ENCODE measurements at regions of chr12 and their contacts with region 1.

Region 1: DNA sequence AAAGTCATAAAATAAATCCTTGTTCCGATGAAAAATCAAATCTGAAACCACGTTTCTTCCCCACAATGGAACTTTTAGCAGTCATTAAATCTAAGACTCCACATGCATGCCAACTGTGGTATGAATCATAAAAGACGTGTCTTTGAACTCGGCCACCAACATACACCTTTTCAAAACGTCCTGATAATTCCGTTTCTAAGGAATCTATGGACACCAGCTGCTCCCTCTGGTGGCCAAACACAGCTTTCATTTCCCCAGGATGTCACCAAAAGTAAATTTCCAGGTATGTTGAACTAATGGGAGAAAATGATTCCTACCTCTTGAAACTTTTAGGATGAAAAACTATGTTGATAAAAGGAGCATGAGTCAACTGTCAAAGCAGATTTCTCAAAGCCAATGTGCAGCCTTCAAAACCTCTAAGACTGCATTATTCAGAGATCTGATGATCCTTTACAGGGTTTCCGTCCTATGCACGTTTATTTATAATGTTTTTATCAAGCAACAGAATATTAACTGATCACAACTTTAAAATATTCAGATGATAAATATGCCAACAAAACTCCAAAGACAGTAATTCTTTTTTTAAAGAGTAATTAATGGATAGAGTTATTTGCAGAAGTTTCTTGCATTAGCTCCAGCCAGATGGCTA is 96.2 kb downstream of the CIT start:
- DNase-seq: no peak

Region 2: GRCh38 chr12:119130523-119130922 is 650.4 kb before region 1 on chr12:
- intact Hi-C with region 1: no loop called
- DNase-seq: no peak

Region 3: DNA sequence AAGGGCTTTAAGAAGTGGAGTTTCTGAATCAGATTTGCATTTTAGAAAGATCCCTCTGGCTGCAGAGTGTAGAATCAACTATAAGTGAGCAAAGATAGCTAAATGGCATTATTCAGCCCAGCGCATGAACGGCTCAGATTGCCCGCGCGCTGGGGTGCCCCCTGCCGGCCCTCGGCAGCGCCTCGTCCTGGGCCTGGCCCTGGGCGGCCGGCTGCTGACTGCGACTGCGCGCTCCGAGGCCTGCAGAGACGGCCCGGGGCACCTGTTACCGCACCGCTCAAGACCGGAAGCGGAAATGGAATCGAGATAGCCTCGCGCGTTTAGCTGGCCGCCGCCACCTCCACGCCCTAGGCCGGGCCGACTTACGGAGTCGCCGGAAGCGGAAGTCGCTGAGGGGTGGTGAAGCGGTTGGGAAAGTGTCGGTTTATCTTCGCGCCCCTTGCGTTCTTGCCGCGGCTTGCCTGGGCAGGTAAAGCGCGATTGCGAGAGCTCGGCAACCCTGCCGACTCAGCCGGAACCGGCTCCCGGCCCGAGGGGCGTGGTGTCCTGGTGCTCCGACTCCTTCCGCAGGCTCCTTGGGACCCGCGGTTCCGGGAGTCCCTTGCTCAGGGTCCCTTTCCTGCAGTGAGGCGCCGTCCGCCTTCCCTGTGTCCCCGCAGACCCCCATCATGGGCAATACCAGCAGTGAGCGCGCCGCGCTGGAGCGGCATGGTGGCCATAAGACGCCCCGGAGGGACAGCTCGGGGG is 113.2 kb before region 1 on chr12 and contains the start of gene PRKAB1:
- intact Hi-C with region 1: loop called (anchors 5 kb)
- DNase-seq: peak; percentile 97
- total RNA-seq, gene PRKAB1: 12.2 TPM

Region 4: DNA sequence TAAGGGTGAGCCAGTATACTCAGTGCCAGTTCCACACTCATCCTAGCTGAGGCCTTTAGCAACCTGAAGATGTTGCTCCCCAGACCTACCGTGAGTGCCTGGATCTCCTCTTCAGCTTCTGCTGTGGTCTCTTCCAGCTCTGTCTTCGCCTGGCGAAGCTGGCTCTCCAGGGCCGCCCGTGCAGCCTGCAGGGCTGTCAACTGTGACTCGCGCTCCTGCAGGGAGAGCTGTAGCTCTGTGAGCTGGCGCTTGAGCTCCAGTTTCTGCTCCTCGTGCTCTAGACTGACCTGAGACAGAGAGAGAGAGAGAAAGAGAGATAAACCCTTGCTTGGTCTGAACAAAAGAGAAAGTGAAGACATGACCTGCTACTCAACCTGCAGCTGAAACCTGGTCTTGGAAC is 28.9 kb before region 1 on chr12:
- intact Hi-C with region 1: no loop called
- DNase-seq: no peak